MCF 10A (cell line): ENCODE measurements at regions of chrX and their contacts with region 1.

Region 1: GRCh38 chrX:153667956-153668396 is 5.6 kb downstream of the PNCK start:
- DNase-seq: peak; percentile 64
- H3K4me3 Mint-ChIP-seq: peak overlapping the region; percentile 68
- H3K27ac Mint-ChIP-seq: no peak overlapping the region
- H3K4me1 Mint-ChIP-seq: no peaks in the 10 kb centered on the region
- H3K27me3 Mint-ChIP-seq: no peaks in the 10 kb centered on the region
- CTCF ChIP-seq: peak; percentile 59

Region 2: GRCh38 chrX:153539171-153539978 is 128.6 kb before region 1 on chrX:
- CTCF ChIA-PET with region 1: interaction called, 42 read pairs
- POLR2A ChIA-PET with region 1: interaction called, 3 read pairs
- intact Hi-C with region 1: loop called (anchors 5 kb)
- DNase-seq: peak; percentile 55
- H3K4me3 Mint-ChIP-seq: no peak overlapping the region
- H3K27ac Mint-ChIP-seq: no peak overlapping the region
- H3K4me1 Mint-ChIP-seq: no peaks in the 10 kb centered on the region
- H3K27me3 Mint-ChIP-seq: no peaks in the 10 kb centered on the region
- CTCF ChIP-seq: peak; percentile 74

Region 3: DNA sequence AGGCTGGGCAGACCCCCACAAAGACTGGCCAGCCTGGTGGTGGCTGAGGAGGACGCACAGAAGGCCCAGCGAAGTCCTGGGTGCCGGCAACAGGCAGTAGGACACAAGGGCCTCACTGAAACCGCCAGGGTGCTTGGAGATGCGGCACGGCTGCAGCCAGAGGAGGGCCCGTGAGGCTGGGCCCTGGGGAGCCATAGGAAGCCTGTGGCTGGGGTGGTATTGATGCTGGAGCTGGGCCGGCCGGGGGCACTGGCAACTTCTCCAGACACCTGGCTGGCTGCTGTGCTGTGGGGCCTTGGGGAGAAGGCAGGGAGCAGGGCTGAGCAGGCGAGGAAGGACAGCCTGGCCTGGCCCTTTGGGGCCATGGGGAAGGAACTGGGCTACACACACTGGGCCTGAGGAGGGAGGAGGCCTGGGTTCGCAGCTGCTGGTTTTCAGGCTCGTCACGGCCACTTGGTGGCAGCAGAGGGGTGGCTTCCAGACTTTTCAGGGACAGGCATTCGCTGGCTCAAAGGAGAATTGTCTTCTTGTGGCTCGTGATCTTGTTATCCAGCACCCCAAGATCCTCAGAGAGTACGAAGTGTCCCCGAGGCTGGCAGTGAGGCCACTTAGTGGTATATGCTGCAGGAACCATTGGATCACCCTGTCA is 113.3 kb before region 1 on chrX:
- CTCF ChIA-PET with region 1: interaction called, 26 read pairs
- POLR2A ChIA-PET with region 1: no interaction called
- intact Hi-C with region 1: loop called (anchors 5 kb)
- DNase-seq: peak; percentile 61
- H3K4me3 Mint-ChIP-seq: no peak overlapping the region
- H3K27ac Mint-ChIP-seq: no peak overlapping the region
- H3K4me1 Mint-ChIP-seq: no peaks in the 10 kb centered on the region
- H3K27me3 Mint-ChIP-seq: no peaks in the 10 kb centered on the region
- CTCF ChIP-seq: peak; percentile 53

Region 4: GRCh38 chrX:153599192-153600031 is 68.6 kb before region 1 on chrX:
- CTCF ChIA-PET with region 1: interaction called, 14 read pairs
- POLR2A ChIA-PET with region 1: interaction called, 3 read pairs
- intact Hi-C with region 1: no loop called
- DNase-seq: peak; percentile 81
- H3K4me3 Mint-ChIP-seq: peak overlapping the region; percentile 72
- H3K27ac Mint-ChIP-seq: peak overlapping the region; percentile 14
- H3K4me1 Mint-ChIP-seq: no peaks in the 10 kb centered on the region
- H3K27me3 Mint-ChIP-seq: no peaks in the 10 kb centered on the region
- CTCF ChIP-seq: no peak

Region 5: DNA sequence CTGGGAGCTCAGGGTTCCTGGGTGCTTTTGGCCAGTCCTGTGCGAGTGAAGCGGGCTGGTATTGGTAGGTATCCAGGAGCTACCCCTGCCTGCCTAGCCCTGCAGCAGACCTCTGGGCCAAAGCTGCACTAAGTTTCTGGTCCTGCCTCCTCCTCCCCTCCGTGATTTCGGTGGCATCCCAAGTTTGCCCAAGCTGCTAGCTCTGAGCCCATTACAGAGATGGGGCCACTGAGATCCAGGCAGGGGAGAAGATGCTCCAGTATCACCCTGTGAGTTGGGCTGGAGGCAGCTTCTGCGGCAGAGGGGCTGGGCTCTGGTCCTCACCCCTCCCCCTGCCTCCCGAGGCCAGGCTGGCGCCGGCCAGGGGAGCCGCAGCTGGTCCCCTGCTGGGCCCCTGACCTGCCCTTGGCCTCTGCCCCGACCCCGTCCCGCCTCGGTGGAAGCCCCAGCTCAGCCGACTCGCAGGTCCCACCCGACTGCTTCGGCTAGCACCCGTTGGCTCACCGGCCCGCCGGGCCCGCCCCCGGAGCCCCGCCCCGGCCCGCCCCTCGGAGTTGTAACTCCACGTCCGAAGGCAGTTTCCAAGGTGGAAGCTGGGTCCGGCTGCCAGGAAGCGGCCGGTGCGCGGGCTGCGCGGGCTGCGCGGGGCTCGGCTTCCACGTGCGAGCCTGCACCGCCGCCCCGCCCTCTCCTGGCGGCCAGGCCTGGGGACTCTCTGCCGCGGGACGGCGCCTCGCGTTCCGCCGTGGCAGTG is 21.2 kb before region 1 on chrX and contains the start of gene DUSP9:
- CTCF ChIA-PET with region 1: interaction called, 17 read pairs
- POLR2A ChIA-PET with region 1: no interaction called
- intact Hi-C with region 1: no loop called
- DNase-seq: no peak
- H3K4me3 Mint-ChIP-seq: no peak within 1 kb of the TSS
- H3K27ac Mint-ChIP-seq: no peak within 1 kb of the TSS
- H3K4me1 Mint-ChIP-seq: peaks cover 6% of the 10 kb centered on the region
- H3K27me3 Mint-ChIP-seq: peaks cover 11% of the 10 kb centered on the region
- CTCF ChIP-seq: no peak
- total RNA-seq, gene DUSP9: not detected in 2 replicates

Region 6: GRCh38 chrX:153708415-153708814 is 40.4 kb after region 1 on chrX:
- CTCF ChIA-PET with region 1: interaction called, 10 read pairs
- POLR2A ChIA-PET with region 1: no interaction called
- intact Hi-C with region 1: no loop called
- DNase-seq: peak; percentile 85
- H3K4me3 Mint-ChIP-seq: peak overlapping the region; percentile 8
- H3K27ac Mint-ChIP-seq: peak overlapping the region; percentile 69
- H3K4me1 Mint-ChIP-seq: no peaks in the 10 kb centered on the region
- H3K27me3 Mint-ChIP-seq: no peaks in the 10 kb centered on the region
- CTCF ChIP-seq: peak; percentile 79